WTC11 (cell line): ENCODE measurements at regions of chr10 and their contacts with region 1.

Region 1: GRCh38 chr10:70363971-70364771 is 18.3 kb downstream of the LRRC20 start:
- DNase-seq: peak; percentile 94
- ATAC-seq: peak; percentile 91
- H3K4me3 Mint-ChIP-seq: no peak overlapping the region
- H3K27ac Mint-ChIP-seq: peak overlapping the region; percentile 66
- H3K4me1 Mint-ChIP-seq: peaks cover 16% of the 10 kb centered on the region
- H3K27me3 Mint-ChIP-seq: no peaks in the 10 kb centered on the region
- CTCF ChIP-seq: peak; percentile 70

Region 2: DNA sequence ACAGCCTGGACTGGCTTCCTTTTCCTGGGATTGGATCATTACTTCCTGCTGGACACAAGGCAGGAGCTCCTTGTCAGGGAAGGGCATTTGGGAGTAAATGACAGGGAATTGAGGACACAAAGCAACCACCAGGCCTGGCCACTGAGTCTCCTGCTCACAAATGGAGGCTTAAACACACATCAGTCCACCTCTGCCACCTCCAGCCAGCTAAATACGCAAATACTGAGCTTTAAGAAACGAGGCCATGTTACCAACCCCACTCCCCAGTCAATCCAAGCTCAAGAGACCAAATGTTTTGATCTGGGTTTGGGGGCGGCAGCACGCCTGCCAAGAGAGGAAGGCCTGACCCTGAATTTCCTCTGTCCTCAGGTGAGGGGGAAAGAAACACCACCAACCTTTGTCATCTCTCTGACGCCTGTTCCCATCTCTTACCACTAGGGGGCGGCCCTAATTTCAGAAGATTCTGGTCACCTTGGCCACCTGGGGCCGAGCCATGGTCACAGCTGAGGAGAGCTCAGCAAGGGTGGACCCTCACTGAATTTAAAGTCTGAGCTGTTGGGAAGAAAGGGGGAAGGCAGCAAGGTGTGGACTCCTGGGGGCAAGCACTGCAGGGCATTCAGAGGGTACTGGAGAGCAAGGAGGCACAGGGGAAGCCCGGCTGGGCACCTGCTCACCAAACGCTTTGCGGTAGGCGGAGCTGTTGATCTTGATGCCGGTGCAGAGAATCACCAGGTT is 248.1 kb before region 1 on chr10:
- CTCF ChIA-PET with region 1: interaction called, 15 read pairs
- POLR2A ChIA-PET with region 1: no interaction called
- DNase-seq: peak; percentile 77
- ATAC-seq: peak; percentile 85
- H3K4me3 Mint-ChIP-seq: no peak overlapping the region
- H3K27ac Mint-ChIP-seq: 0 out of 2 replicates have a peak overlapping the region, but pooled peaks have one; percentile 30
- H3K4me1 Mint-ChIP-seq: peaks cover 10% of the 10 kb centered on the region; the same call in 1 of the 2 replicates
- H3K27me3 Mint-ChIP-seq: no peaks in the 10 kb centered on the region
- CTCF ChIP-seq: peak; percentile 92

Region 3: GRCh38 chr10:70233109-70233938 is 130.8 kb before region 1 on chr10 and contains the start of gene PPA1:
- CTCF ChIA-PET with region 1: interaction called, 21 read pairs
- POLR2A ChIA-PET with region 1: no interaction called
- DNase-seq: peak; percentile 99
- ATAC-seq: peak; percentile 95
- H3K4me3 Mint-ChIP-seq: peak within 1 kb of the TSS; percentile 92
- H3K27ac Mint-ChIP-seq: peak within 1 kb of the TSS; percentile 73
- H3K4me1 Mint-ChIP-seq: peaks cover 8% of the 10 kb centered on the region
- H3K27me3 Mint-ChIP-seq: no peaks in the 10 kb centered on the region; the same call in 1 of the 2 replicates
- CTCF ChIP-seq: no peak
- total RNA-seq, gene PPA1: 140 to 180 TPM (median 144 TPM) in 3 replicates

Region 4: DNA sequence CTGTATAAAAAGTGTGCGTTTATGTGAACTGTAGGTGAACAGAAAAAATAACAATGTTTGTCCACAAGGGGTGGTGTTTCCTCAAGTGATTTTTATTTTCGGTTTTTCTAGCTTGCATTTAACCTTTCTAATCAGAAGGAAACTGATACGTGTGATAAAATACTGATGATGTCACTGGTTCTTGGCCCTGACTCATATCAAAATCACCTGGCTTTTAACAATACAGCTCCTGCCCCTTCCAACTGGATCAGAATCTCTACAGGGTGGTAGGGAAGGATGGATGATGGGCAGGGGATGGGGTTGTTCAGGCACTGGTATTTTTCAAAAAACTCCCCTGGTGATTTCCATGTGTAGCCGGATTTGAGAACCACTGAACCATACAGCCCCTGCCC is 91.2 kb before region 1 on chr10:
- CTCF ChIA-PET with region 1: interaction called, 177 read pairs
- POLR2A ChIA-PET with region 1: no interaction called
- DNase-seq: no peak
- ATAC-seq: no peak
- H3K4me3 Mint-ChIP-seq: no peak overlapping the region
- H3K27ac Mint-ChIP-seq: no peak overlapping the region
- H3K4me1 Mint-ChIP-seq: peaks cover 16% of the 10 kb centered on the region
- H3K27me3 Mint-ChIP-seq: no peaks in the 10 kb centered on the region
- CTCF ChIP-seq: no peak

Region 5: GRCh38 chr10:70376436-70377378 is 12.5 kb after region 1 on chr10:
- CTCF ChIA-PET with region 1: interaction called, 53 read pairs
- POLR2A ChIA-PET with region 1: no interaction called
- DNase-seq: no peak
- ATAC-seq: no peak
- H3K4me3 Mint-ChIP-seq: no peak overlapping the region
- H3K27ac Mint-ChIP-seq: peak overlapping the region; percentile 41
- H3K4me1 Mint-ChIP-seq: peaks cover 38% of the 10 kb centered on the region
- H3K27me3 Mint-ChIP-seq: peaks cover 14% of the 10 kb centered on the region
- CTCF ChIP-seq: no peak

Region 6: GRCh38 chr10:70430493-70431445 is 66.6 kb after region 1 on chr10:
- CTCF ChIA-PET with region 1: interaction called, 10 read pairs
- POLR2A ChIA-PET with region 1: no interaction called
- DNase-seq: peak; percentile 33
- ATAC-seq: peak; percentile 35
- H3K4me3 Mint-ChIP-seq: no peak overlapping the region
- H3K27ac Mint-ChIP-seq: peak overlapping the region; percentile 53
- H3K4me1 Mint-ChIP-seq: peaks cover 23% of the 10 kb centered on the region
- H3K27me3 Mint-ChIP-seq: no peaks in the 10 kb centered on the region
- CTCF ChIP-seq: no peak